H1 (cell line): ENCODE measurements at regions of chr11 and their contacts with region 1.

Region 1: GRCh38 chr11:65637794-65638317 is at the start of gene SIPA1:
- DNase-seq: peak; percentile 83 to 94
- H3K4me3 ChIP-seq: peak within 1 kb of the TSS; percentile 32 to 71 (median 66)
- H3K27ac ChIP-seq: peak within 1 kb of the TSS; percentile 14; the same call in 1 of the 2 replicates
- H3K4me1 ChIP-seq: peaks cover 3 to 26% (median 17%) of the 10 kb centered on the region in 4 experiments
- H3K27me3 ChIP-seq: peaks cover 0 to 4% (median 2%) of the 10 kb centered on the region in 4 experiments; a peak in 2 of 7 replicates
- CTCF ChIP-seq: peak in 2 of 3 experiments; percentile 60 to 71; a peak in 3 of 4 replicates
- EP300 ChIP-seq: no peak
- POLR2A ChIP-seq: peak in 1 of 2 experiments; percentile 74; a peak in 2 of 3 replicates
- RAD21 ChIP-seq: peak; percentile 21 to 51; a peak in 3 of 4 replicates
- total RNA-seq, gene SIPA1: 67.5 and 72.2 TPM in 2 replicates

Region 2: DNA sequence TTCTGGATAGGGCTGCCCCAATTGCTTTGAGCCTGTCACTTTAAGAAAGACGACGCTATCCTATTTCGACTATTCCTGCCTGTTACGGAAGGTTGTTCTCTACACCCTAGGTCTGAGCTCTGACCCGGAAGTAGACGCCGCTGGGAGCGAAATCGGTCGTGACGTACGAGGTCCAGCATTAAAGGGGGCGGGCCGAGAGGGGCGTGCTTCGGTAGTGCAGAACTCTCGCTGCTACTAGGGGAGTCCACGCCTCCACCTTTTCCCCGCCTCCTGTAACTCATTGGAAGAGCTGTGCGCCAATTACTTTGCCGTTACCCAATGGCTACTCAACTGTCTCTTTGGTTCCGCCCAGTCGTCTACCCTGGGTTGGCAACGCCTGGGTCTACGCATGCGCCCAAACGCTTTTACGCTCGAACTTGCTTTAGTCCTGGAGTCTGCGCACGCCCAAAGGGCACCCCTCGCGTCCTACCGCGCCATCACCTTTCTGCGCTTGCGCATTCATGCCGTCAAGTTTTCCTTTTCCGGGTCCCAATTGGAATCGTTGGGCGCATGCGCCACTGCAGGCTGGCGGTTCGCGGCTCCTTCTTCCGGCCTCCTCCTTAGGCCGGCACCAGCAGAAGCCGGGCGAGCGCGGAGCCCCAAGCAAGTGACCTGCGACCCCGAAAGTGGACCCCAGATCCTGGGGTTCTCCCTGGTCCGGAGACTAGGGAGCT is 22.5 kb before region 1 on chr11 and contains the start of gene PCNX3:
- CTCF ChIA-PET with region 1: interaction called, 11 read pairs
- POLR2A ChIA-PET with region 1: interaction called, 38 read pairs
- DNase-seq: peak; percentile 98 to 100
- H3K4me3 ChIP-seq: peak within 1 kb of the TSS; percentile 63 to 88 (median 86)
- H3K27ac ChIP-seq: peak within 1 kb of the TSS; percentile 43; the same call in 1 of the 2 replicates
- H3K4me1 ChIP-seq: peaks cover 0 to 21% (median 11%) of the 10 kb centered on the region in 4 experiments; a peak in 5 of 7 replicates
- H3K27me3 ChIP-seq: no peaks in the 10 kb centered on the region
- CTCF ChIP-seq: no peak
- EP300 ChIP-seq: peak in 1 of 2 experiments; percentile 46; a peak in 1 of 3 replicates
- POLR2A ChIP-seq: 0 out of 3 replicates have a peak, but pooled peaks of 1 of the 2 experiments have one; percentile 49
- RAD21 ChIP-seq: no peak
- total RNA-seq, gene PCNX3: 38.8 and 39.4 TPM in 2 replicates

Region 3: DNA sequence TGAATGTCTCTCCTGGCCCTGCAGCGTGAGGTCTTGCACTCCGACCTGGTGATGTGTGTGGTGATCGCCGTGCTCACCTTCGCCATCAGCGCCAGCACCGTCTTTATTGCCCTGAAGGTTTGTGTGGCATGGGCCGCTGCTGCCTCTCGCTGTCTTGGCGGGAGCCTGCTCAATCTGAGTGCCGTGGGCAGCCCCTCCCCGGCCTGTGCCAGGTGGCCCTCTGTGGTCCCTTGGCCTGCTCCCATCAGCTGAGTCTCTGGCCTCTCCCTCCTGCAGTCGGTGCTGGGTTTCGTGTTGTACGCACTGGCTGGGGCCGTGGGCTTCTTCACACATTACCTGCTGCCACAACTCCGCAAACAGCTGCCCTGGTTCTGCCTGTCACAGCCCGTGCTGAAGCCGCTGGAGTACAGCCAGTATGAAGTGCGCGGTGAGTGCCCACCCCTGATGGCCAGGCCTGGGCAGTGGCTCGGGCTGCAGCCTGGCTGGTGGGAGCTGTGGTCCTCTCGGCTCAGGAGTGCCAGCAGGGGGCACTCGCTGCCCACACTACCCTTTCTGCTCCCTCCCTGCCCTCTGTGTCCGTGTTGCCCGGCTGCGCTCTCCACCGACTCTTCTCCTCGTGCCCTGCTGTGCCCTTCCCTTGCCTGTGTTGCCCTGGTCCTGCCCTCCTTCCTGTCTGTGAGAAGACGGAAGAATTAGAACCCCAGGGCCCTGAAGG is 12.1 kb before region 1 on chr11:
- CTCF ChIA-PET with region 1: interaction called, 14 read pairs
- POLR2A ChIA-PET with region 1: interaction called, 40 read pairs
- DNase-seq: peak in 1 of 2 experiments; percentile 70
- H3K4me3 ChIP-seq: no peak overlapping the region
- H3K27ac ChIP-seq: no peak overlapping the region
- H3K4me1 ChIP-seq: no peaks in the 10 kb centered on the region
- H3K27me3 ChIP-seq: no peaks in the 10 kb centered on the region
- CTCF ChIP-seq: peak in 2 of 3 experiments; percentile 42 to 59; a peak in 2 of 4 replicates
- EP300 ChIP-seq: no peak
- POLR2A ChIP-seq: no peak
- RAD21 ChIP-seq: peak; percentile 61 to 64

Region 4: DNA sequence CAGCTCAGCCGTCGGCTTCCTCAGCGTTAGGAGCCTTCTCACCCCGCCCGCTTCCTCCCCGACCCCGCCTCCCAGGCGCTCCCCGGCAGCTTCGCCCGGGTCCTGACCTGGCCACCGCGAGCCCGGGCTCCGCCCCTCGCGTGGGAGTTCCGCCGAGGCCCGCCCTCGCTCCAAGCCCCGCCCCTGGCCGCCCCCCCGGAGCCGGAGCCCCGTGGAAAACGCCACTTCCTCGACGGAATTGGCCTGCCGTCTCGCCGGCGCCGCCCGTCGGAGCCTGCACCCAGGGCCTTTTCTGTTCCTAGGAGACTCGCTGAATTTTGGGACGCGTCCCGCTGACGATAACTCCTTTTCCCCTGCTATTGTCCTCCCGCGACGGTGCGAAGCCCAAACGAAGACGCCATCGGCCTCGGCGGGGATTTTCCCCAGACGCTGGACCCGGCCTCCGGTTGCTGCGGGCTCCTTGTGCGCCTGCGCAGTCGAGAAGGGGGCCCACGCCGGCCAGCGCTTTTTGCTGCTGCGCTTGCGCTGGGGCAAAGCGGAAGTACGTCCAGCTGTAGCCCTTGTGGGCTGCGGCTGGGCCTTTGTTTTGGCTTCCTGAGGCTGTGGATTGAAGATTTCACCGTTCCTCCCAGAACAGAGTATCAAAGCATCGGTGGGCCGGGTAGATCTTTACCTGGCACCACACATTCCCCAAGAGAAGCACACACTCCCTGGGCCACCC is 14.8 kb after region 1 on chr11:
- CTCF ChIA-PET with region 1: interaction called, 21 read pairs
- POLR2A ChIA-PET with region 1: interaction called, 56 read pairs
- DNase-seq: peak in 1 of 2 experiments; percentile 93
- H3K4me3 ChIP-seq: peak overlapping the region; percentile 45 to 72 (median 60)
- H3K27ac ChIP-seq: peak overlapping the region; percentile 77
- H3K4me1 ChIP-seq: peaks cover 0 to 12% (median 8%) of the 10 kb centered on the region in 4 experiments; a peak in 5 of 7 replicates
- H3K27me3 ChIP-seq: peaks cover 0 to 4% (median 2%) of the 10 kb centered on the region in 4 experiments; a peak in 1 of 7 replicates
- CTCF ChIP-seq: no peak
- EP300 ChIP-seq: no peak
- POLR2A ChIP-seq: peak in 1 of 2 experiments; percentile 65; a peak in 2 of 3 replicates
- RAD21 ChIP-seq: no peak

Region 5: GRCh38 chr11:65662799-65663638 is 25.2 kb after region 1 on chr11 and contains the start of gene RELA:
- CTCF ChIA-PET with region 1: interaction called, 8 read pairs
- POLR2A ChIA-PET with region 1: interaction called, 13 read pairs
- DNase-seq: peak in 1 of 2 experiments; percentile 91
- H3K4me3 ChIP-seq: peak within 1 kb of the TSS; percentile 81 to 86 (median 84)
- H3K27ac ChIP-seq: peak within 1 kb of the TSS; percentile 71
- H3K4me1 ChIP-seq: peaks cover 0 to 5% (median 2%) of the 10 kb centered on the region in 4 experiments; a peak in 4 of 7 replicates
- H3K27me3 ChIP-seq: no peaks in the 10 kb centered on the region
- CTCF ChIP-seq: no peak
- EP300 ChIP-seq: peak in 1 of 2 experiments; percentile 66; a peak in 1 of 3 replicates
- POLR2A ChIP-seq: peak in 1 of 2 experiments; percentile 51; a peak in 2 of 3 replicates
- RAD21 ChIP-seq: no peak
- total RNA-seq, gene RELA: 25.5 and 27.5 TPM in 2 replicates